ENCODE measurements at regions of chr16 and their contacts with region 1.

Region 1: DNA sequence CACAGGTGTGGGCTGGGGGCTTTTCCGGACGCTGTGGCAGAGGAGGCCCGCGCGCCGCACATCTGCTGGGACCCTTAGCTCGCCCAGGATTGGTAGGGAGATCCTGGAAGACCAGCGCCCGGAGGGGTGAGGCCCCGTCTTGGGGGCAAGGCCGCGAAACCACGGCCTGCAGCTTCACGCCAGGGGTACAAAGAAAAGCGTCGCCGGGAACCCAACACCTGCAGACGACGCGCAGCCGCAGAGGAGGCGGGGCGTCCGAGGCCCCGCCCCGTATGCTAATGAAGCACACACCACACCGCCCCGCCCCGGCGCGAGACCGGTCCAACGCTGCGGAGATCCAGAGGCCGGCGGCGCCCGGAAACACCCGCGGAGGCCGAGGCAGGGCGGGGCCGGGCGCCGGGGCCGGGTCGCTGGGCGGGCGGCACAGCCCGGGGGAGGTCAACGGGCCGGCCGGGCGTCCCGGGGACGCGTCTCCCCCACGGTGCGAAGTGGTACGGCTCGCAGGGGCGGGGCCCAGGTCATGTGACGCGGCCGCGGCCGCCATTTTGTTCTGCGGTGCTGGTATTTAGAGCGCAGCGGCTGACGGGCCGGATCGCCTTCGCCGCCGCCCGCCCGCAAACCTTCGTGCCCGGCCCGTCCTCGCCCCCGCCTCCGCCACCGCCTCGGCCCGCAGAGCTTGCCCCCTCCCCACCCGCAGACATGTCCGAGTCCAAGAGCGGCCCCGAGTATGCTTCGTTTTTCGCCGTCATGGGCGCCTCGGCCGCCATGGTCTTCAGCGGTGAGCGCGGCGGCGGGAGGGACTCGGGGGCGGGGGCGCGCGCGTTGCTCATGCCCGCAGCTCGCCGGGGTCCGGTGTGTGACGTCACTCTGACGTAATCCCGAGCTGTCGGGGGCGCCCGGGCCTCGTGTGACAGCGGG is at the start of gene ATP6V0C:
- DNase-seq: peak; percentile 95
- ATAC-seq: peak; percentile 78
- H3K4me3 Mint-ChIP-seq: peak within 1 kb of the TSS; percentile 94
- H3K27ac Mint-ChIP-seq: peak within 1 kb of the TSS; percentile 92
- H3K4me1 Mint-ChIP-seq: peaks cover 85% of the 10 kb centered on the region
- H3K27me3 Mint-ChIP-seq: no peaks in the 10 kb centered on the region
- CTCF ChIP-seq: no peak
- total RNA-seq, gene ATP6V0C: 74.9 and 91.4 TPM in 2 replicates

Region 2: DNA sequence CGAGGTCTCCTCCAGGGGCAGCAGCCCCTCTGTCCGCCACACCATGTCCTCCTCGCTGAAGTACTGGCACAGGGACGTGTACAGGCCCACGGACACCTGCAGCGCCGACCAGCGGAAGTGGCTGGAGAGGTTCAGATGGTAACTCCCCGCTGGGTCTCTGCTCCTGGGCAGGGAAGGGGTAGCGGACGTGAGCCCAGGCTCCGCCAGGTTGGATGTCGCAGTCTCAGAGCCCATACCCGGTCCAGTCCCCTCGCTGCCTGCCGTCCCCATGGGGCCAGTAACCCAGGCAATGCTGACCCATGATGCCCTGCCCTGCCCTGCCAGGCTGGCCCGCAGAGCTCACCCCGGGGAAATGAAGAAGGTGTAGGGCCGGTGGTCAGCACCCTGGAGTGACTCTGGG is 411.2 kb before region 1 on chr16:
- CTCF ChIA-PET with region 1: no interaction called
- POLR2A ChIA-PET with region 1: no interaction called
- intact Hi-C with region 1: no loop called
- DNase-seq: no peak
- ATAC-seq: no peak
- H3K4me3 Mint-ChIP-seq: no peak overlapping the region
- H3K27ac Mint-ChIP-seq: no peak overlapping the region
- H3K4me1 Mint-ChIP-seq: no peaks in the 10 kb centered on the region
- H3K27me3 Mint-ChIP-seq: no peaks in the 10 kb centered on the region
- CTCF ChIP-seq: no peak

Region 3: GRCh38 chr16:2267913-2268666 is 245.6 kb before region 1 on chr16 and contains the start of gene RNPS1:
- CTCF ChIA-PET with region 1: no interaction called
- POLR2A ChIA-PET with region 1: interaction called, 5 read pairs
- intact Hi-C with region 1: loop called (anchors 5 kb)
- DNase-seq: peak; percentile 98
- ATAC-seq: peak; percentile 91
- H3K4me3 Mint-ChIP-seq: peak within 1 kb of the TSS; percentile 93
- H3K27ac Mint-ChIP-seq: peak within 1 kb of the TSS; percentile 98
- H3K4me1 Mint-ChIP-seq: peaks cover 43% of the 10 kb centered on the region
- H3K27me3 Mint-ChIP-seq: no peaks in the 10 kb centered on the region
- CTCF ChIP-seq: no peak
- total RNA-seq, gene RNPS1: 228 and 232 TPM in 2 replicates

Region 4: DNA sequence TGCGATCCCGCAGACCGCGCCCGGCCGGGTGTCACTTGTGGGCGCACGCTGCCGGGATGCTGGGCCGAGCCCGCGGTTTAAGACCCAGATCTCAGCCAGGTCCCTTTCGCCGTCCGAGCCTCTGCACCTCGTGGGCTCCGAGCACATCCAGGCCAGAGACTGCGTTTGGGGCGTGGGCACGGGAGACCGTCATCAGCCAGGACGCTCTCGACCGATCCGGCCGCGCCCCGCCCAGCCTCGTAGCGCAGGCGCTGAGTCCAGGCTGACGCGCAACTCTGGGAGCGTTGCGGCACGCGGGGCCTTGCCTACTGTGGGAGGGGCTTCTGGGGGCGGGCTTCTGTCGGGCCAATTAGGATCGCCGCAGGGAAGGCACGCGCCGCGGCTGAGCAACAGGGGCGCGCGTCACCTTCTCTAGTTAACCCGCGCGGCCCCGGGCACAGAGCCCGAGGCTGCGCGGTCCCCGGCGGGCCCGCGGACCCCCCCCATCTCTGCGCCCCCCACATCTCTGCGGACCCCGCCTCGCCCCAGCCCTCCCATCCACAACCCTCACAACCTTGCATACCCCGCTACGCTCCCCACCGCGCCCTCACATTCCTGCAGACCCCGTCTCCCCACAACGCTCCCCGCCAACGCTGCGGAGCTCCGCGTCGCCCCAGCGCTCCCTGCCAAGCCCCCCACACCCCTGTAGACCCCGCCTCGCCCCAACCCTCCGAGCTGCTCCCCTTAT is 18.3 kb after region 1 on chr16:
- CTCF ChIA-PET with region 1: no interaction called
- POLR2A ChIA-PET with region 1: interaction called, 38 read pairs
- intact Hi-C with region 1: loop called (anchors 1 kb)
- DNase-seq: peak; percentile 97
- ATAC-seq: peak; percentile 94
- H3K4me3 Mint-ChIP-seq: peak overlapping the region; percentile 97
- H3K27ac Mint-ChIP-seq: peak overlapping the region; percentile 96
- H3K4me1 Mint-ChIP-seq: peaks cover 23% of the 10 kb centered on the region
- H3K27me3 Mint-ChIP-seq: no peaks in the 10 kb centered on the region
- CTCF ChIP-seq: no peak

Region 5: GRCh38 chr16:2537453-2538379 is 24.1 kb after region 1 on chr16 and contains the start of gene PDPK1:
- CTCF ChIA-PET with region 1: no interaction called
- POLR2A ChIA-PET with region 1: interaction called, 38 read pairs
- intact Hi-C with region 1: loop called (anchors 1 kb)
- DNase-seq: peak; percentile 85
- ATAC-seq: peak; percentile 88
- H3K4me3 Mint-ChIP-seq: peak within 1 kb of the TSS; percentile 87
- H3K27ac Mint-ChIP-seq: peak within 1 kb of the TSS; percentile 90
- H3K4me1 Mint-ChIP-seq: peaks cover 44% of the 10 kb centered on the region
- H3K27me3 Mint-ChIP-seq: no peaks in the 10 kb centered on the region
- CTCF ChIP-seq: no peak
- total RNA-seq, gene PDPK1: 42.5 and 62.0 TPM in 2 replicates